ENCODE measurements at regions of chr6 and their contacts with region 1.

Region 1: GRCh38 chr6:113994918-113995342 is 24.0 kb upstream of the HDAC2 start:
- DNase-seq: peak in 1 of 2 donors; percentile 44
- ATAC-seq: peak in 7 of 8 donors; percentile 36 to 91 (median 68)
- H3K4me3 ChIP-seq: no peak overlapping the region
- H3K27ac ChIP-seq: peak overlapping the region in 3 of 10 donors; percentile 33 to 55 (median 35)
- H3K4me1 ChIP-seq: peaks cover 0 to 32% (median 16%) of the 10 kb centered on the region in 9 donors
- H3K27me3 ChIP-seq: no peaks in the 10 kb centered on the region
- CTCF ChIP-seq: peak in 7 of 9 donors; percentile 37 to 66 (median 58)

Region 2: GRCh38 chr6:114108119-114109002 is 113.4 kb after region 1 on chr6:
- intact Hi-C with region 1: loop called in 6 of 10 experiments (anchors 2 to 10 kb)
- DNase-seq: peak; percentile 48 to 49
- ATAC-seq: peak in 6 of 8 donors; percentile 25 to 74 (median 52)
- H3K4me3 ChIP-seq: no peak overlapping the region
- H3K27ac ChIP-seq: no peak overlapping the region
- H3K4me1 ChIP-seq: no peaks in the 10 kb centered on the region
- H3K27me3 ChIP-seq: peaks cover 0 to 3% (median 0%) of the 10 kb centered on the region in 7 donors
- CTCF ChIP-seq: peak; percentile 6 to 71 (median 66)

Region 3: GRCh38 chr6:114304304-114304887 is 309.5 kb after region 1 on chr6:
- intact Hi-C with region 1: loop called in 1 of 10 experiments (anchors 10 kb)
- DNase-seq: no peak
- ATAC-seq: no peak
- H3K4me3 ChIP-seq: no peak overlapping the region
- H3K27ac ChIP-seq: no peak overlapping the region
- H3K4me1 ChIP-seq: no peaks in the 10 kb centered on the region
- H3K27me3 ChIP-seq: no peaks in the 10 kb centered on the region
- CTCF ChIP-seq: peak in 8 of 9 donors; percentile 19 to 61 (median 47)